ENCODE measurements at regions of chr3 and their contacts with region 1.

Region 1: GRCh38 chr3:139561959-139562676 is 22.6 kb upstream of the RBP1 start:
- DNase-seq: peak in 1 of 2 donors; percentile 43
- H3K4me3 ChIP-seq: no peak overlapping the region
- H3K27ac ChIP-seq: no peak overlapping the region
- H3K4me1 ChIP-seq: no peaks in the 10 kb centered on the region
- H3K27me3 ChIP-seq: no peaks in the 10 kb centered on the region
- CTCF ChIP-seq: peak; percentile 58 to 85 (median 68)
- POLR2A ChIP-seq: no peak

Region 2: DNA sequence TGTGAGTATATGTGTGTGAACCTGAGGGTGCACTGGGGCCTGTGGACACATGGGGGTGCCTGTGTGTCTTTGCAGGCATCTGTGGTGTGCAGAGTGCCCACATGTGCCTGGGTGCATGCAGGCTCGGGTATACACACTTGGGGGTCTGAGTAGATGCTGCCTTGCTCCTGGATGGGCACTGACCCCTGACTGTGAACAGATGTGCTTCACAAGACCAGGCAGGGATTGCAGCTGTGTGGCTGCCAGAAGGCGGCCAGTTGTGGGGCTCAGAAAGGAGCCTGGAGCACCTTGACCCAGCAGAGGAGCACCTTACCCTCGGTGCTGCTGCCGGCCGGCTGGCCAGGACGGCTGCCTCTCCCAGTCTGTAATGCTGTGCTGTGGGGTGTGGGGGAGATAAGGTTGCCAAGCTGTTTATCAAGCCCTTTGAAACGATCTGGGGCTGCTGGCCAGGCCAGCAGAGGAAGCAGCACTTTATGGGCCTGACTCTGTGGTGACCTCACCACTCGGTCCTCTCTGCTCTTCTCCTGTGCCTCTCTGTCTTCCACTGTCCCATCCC is 273.8 kb before region 1 on chr3:
- intact Hi-C with region 1: no loop called
- DNase-seq: peak; percentile 30 to 64
- H3K4me3 ChIP-seq: no peak overlapping the region
- H3K27ac ChIP-seq: peak overlapping the region; percentile 72 to 75
- H3K4me1 ChIP-seq: peaks cover 0 to 6% of the 10 kb centered on the region in 2 donors
- H3K27me3 ChIP-seq: no peaks in the 10 kb centered on the region
- CTCF ChIP-seq: no peak
- POLR2A ChIP-seq: no peak

Region 3: DNA sequence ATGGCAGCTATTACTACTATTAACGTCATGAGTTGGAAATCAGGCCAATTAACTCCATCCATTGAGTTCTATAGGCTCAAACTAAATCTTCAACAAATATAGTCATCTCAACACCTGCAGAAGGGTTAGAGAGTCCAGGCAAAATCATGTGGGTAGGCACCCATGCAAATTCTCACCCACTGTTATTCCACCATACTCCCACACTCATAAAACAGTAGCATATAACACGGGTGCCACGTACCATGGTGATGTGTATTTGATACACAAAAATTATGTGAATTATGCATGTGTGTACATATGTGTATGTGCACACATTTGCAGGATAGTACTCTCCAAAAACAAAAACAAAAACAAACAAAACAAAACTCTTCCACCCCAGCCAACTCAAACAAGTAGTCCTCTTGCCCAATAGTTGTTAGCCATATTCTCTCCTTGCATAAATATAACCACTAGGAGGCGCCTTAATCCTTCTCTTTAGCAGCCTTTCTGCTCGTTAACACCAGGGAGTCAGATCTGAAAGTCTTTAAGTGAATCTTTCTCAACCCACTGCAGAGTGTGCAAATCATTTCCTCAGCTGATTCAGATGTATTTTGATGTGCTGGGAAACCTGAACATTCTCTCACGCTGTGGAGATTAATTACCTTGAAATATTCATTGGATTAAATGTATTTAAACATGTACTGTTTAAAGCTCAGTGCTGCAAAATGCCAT is 134.7 kb before region 1 on chr3:
- intact Hi-C with region 1: loop called (anchors 10 kb)
- DNase-seq: peak in 1 of 2 donors; percentile 22
- H3K4me3 ChIP-seq: no peak overlapping the region
- H3K27ac ChIP-seq: no peak overlapping the region
- H3K4me1 ChIP-seq: no peaks in the 10 kb centered on the region
- H3K27me3 ChIP-seq: no peaks in the 10 kb centered on the region
- CTCF ChIP-seq: peak; percentile 76 to 91 (median 82)
- POLR2A ChIP-seq: no peak

Region 4: GRCh38 chr3:139671863-139672646 is 109.9 kb after region 1 on chr3:
- intact Hi-C with region 1: no loop called
- DNase-seq: no peak
- H3K4me3 ChIP-seq: no peak overlapping the region
- H3K27ac ChIP-seq: no peak overlapping the region
- H3K4me1 ChIP-seq: no peaks in the 10 kb centered on the region
- H3K27me3 ChIP-seq: no peaks in the 10 kb centered on the region
- CTCF ChIP-seq: no peak
- POLR2A ChIP-seq: no peak

Region 5: DNA sequence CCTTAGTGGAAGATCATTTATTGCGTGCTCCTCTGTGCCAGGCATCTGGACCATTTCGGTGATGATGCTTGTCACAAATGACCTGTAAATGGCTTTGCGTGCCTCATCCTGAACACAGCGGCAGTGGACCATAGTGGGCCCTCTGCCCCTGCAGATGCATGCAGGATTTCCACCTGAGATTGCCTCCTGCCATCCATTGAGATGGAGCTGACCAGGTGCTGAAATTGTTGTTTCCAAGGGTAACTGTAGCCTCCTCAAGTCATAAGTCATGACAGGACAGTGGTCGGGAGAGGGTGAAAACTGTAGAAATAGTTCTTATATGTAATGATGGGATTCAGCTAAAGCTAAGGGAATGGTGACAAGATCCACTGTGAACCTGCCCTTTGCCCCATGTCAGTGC is 408.4 kb after region 1 on chr3:
- intact Hi-C with region 1: no loop called
- DNase-seq: no peak
- H3K4me3 ChIP-seq: no peak overlapping the region
- H3K27ac ChIP-seq: no peak overlapping the region
- H3K4me1 ChIP-seq: no peaks in the 10 kb centered on the region
- H3K27me3 ChIP-seq: no peaks in the 10 kb centered on the region
- CTCF ChIP-seq: no peak
- POLR2A ChIP-seq: no peak

Measured in uterus (tissue), 4 donors.